Right cardiac atrium (tissue), 5 donors: ENCODE measurements at regions of chr19 and their contacts with region 1.

Region 1: DNA sequence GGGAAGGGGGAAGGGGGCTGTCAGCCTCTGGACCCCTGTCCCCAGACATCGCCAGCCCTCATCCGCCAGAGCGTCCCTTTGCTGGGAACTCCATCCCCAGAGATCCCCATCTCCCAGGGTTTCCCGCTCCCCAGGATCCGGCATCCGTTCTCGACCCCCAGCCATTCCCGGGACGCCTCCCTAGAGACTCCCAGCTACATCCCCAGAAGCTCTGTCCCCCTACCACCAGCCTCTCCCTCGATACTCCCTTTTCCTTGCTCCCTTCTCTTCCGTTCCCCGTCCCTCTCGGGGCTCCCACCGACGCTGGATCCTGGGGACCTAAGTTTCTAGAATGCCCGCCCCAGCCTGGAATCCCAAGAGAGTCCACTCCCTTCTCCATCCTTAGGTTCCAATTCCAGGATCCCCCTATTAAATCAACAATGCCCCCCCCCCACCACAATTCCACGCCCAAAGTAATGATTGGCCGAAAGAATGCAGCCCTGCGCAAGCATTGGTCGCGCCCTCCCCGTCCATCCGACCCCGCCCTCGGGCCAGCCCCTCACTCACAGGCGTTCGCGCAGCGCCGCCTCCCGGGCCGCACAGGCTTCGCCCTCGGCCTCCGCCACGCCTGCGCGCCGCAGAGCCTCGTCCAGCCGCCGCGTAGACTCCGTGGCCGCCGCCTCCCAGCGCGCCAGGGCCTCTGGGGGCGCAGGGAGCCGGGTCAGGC is 3.2 kb downstream of the CCDC194 start:
- DNase-seq: peak; percentile 95 to 98 (median 97)
- ATAC-seq: peak; percentile 95 to 97
- H3K4me3 ChIP-seq: peak overlapping the region; percentile 42
- H3K27ac ChIP-seq: no peak overlapping the region
- H3K4me1 ChIP-seq: no peaks in the 10 kb centered on the region
- H3K27me3 ChIP-seq: no peaks in the 10 kb centered on the region

Region 2: GRCh38 chr19:17292286-17293097 is 98.3 kb before region 1 on chr19:
- intact Hi-C with region 1: loop called in 3 of 4 experiments (anchors 10 kb)
- DNase-seq: peak; percentile 74 to 92 (median 91)
- ATAC-seq: peak; percentile 91 to 93
- H3K4me3 ChIP-seq: peak overlapping the region; percentile 53
- H3K27ac ChIP-seq: peak overlapping the region; percentile 11
- H3K4me1 ChIP-seq: no peaks in the 10 kb centered on the region
- H3K27me3 ChIP-seq: no peaks in the 10 kb centered on the region

Region 3: DNA sequence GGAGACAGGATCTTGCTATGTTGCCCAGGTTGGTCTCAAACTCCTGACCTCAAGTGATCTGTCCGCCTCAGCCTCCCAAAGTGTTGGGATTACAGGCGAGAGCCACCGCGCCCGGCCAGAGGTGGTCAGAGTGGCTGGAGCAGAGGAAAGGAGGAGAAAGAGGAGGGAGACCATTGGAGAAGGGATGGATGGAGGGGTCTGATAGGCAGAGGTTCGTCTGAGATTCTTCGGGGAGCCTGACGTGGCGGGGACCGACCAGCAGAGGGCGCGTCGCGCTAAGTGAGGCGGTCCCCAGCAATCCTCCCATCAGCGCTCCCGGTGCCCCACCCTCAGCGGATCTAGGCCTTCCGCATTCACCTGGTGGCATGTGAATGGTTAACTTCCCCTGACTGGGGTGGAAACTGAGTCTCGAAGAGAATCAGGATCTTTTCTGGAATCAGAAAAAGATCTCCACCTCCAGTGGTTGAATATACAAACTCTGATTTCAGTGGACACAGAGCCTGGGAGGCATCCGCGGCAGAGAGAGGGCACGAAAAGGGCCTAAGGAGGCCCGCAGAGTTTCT is 44.6 kb before region 1 on chr19:
- intact Hi-C with region 1: loop called in 3 of 4 experiments (anchors 2 to 5 kb)
- DNase-seq: peak; percentile 78 to 92 (median 92)
- ATAC-seq: peak; percentile 73 to 75
- H3K4me3 ChIP-seq: no peak overlapping the region
- H3K27ac ChIP-seq: no peak overlapping the region
- H3K4me1 ChIP-seq: no peaks in the 10 kb centered on the region
- H3K27me3 ChIP-seq: no peaks in the 10 kb centered on the region

Region 4: DNA sequence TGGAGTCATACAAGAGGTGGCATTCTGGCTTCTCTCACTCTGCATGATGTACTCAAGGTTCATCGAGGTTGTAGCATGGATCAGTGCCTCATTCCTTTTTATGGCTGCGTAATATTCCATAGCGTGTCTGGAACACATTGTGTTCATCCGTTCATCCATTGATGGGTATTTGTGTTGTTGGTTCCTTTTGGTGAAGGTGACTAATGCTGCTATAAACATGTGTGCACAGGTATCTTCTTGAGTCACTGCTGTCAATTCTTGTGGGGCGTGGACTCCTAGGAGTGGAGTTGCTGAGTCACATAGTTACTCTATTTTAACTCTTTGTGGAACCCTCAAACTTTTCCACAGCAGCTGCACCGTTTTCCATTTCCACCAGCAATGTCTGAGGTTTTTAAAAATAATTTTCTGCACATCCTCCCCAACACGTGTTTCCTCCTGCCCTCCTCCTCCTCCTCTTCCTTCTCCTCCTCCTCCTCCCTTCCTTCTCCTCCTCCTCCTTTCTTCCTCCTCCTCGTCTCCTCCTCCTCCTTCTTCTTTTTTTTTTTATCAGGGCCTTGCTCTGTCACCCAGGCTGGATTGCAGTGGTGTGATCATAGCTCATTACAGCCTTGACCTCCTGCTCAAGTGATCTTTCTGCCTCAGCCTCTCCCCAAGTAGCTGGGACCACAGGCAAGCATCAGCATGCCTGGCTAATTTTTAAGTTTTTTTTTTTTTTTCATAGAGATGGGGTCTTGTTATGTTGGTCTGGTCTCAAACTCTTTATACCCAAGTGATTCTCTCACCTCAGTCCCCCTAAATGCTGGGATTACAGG is 59.7 kb after region 1 on chr19:
- intact Hi-C with region 1: loop called in 1 of 4 experiments (anchors 10 kb)
- DNase-seq: no peak
- ATAC-seq: no peak
- H3K4me3 ChIP-seq: no peak overlapping the region
- H3K27ac ChIP-seq: no peak overlapping the region
- H3K4me1 ChIP-seq: no peaks in the 10 kb centered on the region
- H3K27me3 ChIP-seq: no peaks in the 10 kb centered on the region

Region 5: DNA sequence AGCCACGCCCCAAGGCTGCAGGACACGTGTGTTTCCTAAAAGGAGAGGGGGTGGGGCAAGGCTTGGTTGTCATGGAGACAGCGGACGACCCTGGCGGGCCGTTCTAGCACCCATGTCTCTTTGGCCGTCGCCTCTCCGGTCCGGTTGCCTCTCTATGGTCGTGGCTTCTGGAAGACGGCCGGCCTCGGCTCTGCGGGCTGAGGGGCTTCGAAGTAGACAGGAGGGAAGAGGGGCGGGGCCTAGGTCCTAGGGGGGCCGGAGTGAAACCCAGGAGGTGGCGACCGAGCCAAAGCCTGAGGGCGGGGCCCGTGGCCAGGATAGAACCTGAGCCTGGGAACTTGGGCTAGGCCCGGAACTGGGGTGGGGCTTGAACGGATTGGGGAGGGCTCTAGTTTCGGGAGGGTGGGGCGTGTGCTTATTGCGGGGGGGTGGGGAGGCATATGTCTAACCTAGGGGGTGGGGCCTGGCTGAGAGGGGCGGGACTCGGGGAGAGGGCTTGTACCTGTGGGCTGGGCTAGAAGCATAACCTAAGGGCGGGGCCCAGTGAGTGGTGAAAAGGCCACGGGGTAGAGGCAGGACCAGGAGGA is 78.8 kb after region 1 on chr19:
- intact Hi-C with region 1: loop called in 1 of 4 experiments (anchors 10 kb)
- DNase-seq: peak; percentile 97 to 99 (median 99)
- ATAC-seq: peak; percentile 86 to 87
- H3K4me3 ChIP-seq: peak overlapping the region; percentile 76
- H3K27ac ChIP-seq: peak overlapping the region; percentile 98
- H3K4me1 ChIP-seq: peaks cover 3% of the 10 kb centered on the region
- H3K27me3 ChIP-seq: no peaks in the 10 kb centered on the region